ENCODE measurements at regions of chr1 and their contacts with region 1.

Region 1: DNA sequence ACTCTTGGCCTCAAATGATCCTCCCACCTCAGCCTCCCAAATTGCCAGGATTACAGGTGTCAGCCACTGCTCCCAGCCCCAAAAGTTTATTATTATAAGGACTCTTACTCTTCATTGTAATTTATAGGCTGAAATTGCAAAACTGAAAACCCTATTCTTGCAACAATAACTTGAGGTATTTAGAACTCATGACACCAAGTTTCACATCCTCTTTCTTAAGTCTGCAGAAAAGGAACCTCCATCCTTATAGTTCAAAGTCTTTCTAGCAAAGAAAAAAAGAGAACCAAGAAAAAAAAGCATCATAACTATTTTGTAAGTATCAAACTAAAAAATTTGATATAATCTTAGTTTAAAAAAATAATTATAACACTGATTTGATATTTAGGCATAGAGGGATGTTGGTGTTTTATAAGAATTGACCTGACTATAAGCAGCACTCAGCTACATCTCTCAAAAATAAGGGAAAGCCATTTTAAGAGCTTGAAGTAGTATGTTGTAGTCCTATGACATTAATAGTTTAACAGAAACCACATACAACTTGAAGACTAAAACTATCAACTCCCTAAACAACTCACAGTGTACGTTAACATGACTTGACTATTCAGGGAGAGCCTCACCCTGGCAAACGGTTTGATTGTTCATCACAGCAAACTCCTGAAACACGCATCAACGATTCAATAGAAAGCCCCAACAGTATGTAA is 122.4 kb downstream of the AKT3 start:
- DNase-seq: peak; percentile 20
- ATAC-seq: peak; percentile 86
- H3K4me3 Mint-ChIP-seq: peak overlapping the region; percentile 39
- H3K27ac Mint-ChIP-seq: peak overlapping the region; percentile 76
- H3K4me1 Mint-ChIP-seq: peaks cover 55% of the 10 kb centered on the region
- H3K27me3 Mint-ChIP-seq: no peaks in the 10 kb centered on the region
- CTCF ChIP-seq: no peak

Region 2: GRCh38 chr1:243740255-243740999 is 12.8 kb after region 1 on chr1:
- CTCF ChIA-PET with region 1: no interaction called
- POLR2A ChIA-PET with region 1: no interaction called
- intact Hi-C with region 1: loop called (anchors 2 kb)
- DNase-seq: no peak
- ATAC-seq: no peak
- H3K4me3 Mint-ChIP-seq: no peak overlapping the region
- H3K27ac Mint-ChIP-seq: no peak overlapping the region
- H3K4me1 Mint-ChIP-seq: peaks cover 18% of the 10 kb centered on the region
- H3K27me3 Mint-ChIP-seq: no peaks in the 10 kb centered on the region
- CTCF ChIP-seq: no peak

Region 3: GRCh38 chr1:244255426-244255965 is 527.8 kb after region 1 on chr1:
- CTCF ChIA-PET with region 1: no interaction called
- POLR2A ChIA-PET with region 1: interaction called, 12 read pairs
- intact Hi-C with region 1: no loop called
- DNase-seq: no peak
- ATAC-seq: no peak
- H3K4me3 Mint-ChIP-seq: no peak overlapping the region
- H3K27ac Mint-ChIP-seq: peak overlapping the region; percentile 84
- H3K4me1 Mint-ChIP-seq: peaks cover 46% of the 10 kb centered on the region
- H3K27me3 Mint-ChIP-seq: no peaks in the 10 kb centered on the region
- CTCF ChIP-seq: no peak

Measured in activated B cell treated with CpG ODN at 0.5 μM for 24 hours (primary cell).